ENCODE measurements at regions of chr5 and their contacts with region 1.

Region 1: DNA sequence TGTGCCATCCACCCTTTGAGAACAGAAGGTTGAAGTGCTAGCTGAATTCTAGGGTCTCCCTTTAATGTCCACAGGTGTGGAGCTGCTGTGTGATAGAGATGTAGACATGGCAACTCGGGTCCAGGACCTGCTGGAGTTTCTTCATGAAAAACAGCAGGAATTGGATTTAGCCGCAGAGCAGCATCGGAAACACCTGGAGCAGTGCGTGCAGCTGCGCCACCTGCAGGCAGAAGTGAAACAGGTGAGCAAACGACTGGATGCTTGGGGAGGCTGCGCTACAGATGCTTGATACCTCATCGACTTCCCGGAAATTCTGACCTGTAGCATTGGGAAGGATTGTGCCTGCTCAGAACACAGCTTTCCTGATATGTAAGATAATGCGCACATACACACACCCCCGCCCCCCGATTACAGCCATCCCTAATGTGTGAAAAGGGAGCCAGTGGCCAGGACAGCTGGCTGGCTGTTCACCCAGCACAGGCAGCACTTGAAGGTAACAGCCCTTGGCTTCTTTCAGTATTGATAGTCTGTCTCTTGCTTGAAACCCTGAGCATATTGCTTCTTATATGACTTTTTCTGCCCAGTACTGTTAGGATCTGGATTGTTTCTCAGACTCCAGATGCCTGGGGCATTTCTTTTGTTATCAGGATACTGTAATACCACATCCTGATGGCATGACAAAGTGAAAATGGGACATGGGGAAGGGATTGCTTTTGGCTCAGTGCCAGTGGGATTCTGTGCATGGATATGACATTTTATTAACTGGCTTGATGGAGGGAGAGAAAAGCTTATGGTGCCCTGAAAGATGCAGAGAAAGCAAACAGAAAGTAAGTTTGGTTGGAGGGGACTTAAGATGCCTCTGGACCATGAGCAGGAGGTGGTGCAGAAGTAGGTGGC is 216.8 kb upstream of the OTULINL start:
- DNase-seq: no peak
- H3K4me3 ChIP-seq: no peak overlapping the region
- CTCF ChIP-seq: peak; percentile 45

Region 2: DNA sequence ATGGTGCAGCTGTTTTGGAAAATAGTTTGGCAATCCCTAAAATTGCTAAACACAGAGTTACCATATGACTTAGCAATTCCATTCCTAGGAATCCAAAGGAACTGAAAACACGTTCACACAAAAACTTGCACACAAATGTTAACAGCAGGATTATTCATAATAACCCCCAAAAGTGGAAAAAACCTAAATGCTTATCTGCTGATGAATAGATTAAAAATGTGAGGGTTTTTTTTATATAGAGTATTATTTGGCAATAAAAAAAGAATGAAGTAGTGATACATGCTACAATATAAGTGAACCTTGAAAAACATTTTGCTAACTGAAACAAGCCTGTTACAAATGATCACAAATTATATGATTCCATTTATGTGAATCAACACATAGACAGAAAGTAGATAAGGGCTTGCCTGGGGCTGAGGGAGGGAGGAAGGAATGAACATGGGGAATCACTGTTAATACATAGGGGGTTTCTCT is 266.8 kb before region 1 on chr5:
- CTCF ChIA-PET with region 1: no interaction called
- POLR2A ChIA-PET with region 1: no interaction called
- DNase-seq: peak; percentile 78
- H3K4me3 ChIP-seq: no peak overlapping the region
- CTCF ChIP-seq: no peak

Region 3: DNA sequence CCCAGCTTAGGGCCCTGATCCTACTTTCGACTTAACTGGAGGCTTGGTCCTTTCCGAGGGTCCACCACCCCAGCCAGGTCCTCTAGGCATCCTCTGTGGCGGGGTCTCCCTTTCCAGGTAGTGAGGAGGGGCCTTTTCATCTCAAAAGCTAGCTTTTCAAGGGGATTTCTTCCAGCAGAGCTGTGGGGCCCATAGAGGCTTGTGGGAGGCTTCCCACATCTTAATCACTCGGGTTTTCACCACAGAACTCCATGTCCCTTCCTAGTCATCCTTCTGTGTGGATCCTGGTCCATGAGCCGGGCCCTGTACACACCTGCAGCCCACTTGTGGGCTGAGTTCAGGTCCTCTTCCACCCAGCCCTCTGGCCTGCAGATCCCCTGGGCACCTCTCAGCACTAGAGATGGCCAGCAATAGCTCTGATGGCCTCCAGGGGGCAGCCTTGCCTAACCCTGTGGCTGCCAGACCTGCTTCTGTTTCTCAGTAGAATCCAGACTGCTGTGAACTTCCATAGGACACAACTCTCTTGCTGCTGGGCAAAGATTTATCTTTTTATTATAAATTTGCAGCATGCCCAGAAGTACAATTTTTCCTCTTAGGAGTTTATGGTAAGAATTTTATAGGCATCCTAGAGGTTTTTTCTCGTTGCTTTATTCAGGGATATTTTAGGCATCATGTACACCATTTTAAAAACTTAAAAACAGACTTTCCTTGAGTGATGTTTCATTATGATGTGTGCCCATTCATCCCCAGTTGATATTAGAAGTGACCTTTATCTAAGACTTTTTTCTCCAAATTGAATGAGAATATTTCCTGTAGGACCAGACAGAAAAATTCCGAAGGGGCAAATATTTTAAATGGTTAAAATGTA is 12.7 kb before region 1 on chr5:
- CTCF ChIA-PET with region 1: interaction called, 38 read pairs
- POLR2A ChIA-PET with region 1: interaction called, 3 read pairs
- DNase-seq: no peak
- H3K4me3 ChIP-seq: no peak overlapping the region
- CTCF ChIP-seq: peak; percentile 96